Naive thymus-derived CD4-positive, alpha-beta T cell (primary cell): ENCODE measurements at regions of chr14 and their contacts with region 1.

Region 1: DNA sequence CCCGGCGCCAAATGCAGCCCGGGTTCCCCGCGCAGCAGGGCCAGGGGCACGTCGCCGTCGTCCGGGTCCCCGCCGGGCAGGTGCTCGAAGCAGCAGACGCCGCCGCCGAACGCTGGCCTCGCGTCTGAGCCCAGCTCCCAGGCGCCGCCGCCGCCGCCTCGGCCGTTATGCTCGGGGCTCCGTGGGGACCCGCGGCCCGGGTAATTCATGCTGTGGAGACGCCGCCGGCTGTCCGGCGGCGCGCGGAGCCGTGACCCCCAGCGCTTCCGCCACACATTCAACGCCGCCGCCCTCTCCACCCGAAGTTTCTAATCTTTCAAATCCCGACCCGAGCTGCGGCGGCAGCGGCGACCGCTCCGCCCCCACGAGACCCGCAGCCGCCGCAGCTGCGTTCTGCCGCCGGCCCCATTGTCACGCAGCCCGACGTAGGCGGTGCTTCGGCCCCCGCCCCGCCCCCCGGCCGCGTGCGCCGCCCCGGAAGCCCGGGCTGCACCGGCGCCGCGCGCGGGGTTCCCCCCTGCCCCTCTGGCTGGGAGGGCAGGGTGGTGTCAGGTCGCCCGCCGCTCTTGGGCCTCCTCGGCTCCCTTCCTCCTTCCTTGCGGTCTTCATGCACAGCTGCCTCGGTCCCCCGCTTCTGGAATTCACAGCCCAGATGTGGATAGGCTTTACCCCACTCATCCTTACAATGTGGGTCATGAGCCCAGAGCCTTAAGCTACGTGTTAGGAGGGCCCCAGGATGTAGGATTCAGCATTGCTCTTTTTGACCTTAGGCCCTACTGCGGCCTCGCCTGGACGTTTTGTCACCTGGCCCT is at the start of gene DDHD1:
- DNase-seq: peak; percentile 76 to 88 (median 85)
- ATAC-seq: peak; percentile 95
- H3K4me3 ChIP-seq: peak within 1 kb of the TSS; percentile 86
- H3K4me3 Mint-ChIP-seq: peak within 1 kb of the TSS; percentile 95 to 100 (median 98)
- H3K27ac ChIP-seq: peak within 1 kb of the TSS; percentile 87
- H3K27ac Mint-ChIP-seq: peak within 1 kb of the TSS; percentile 94 to 99 (median 98)
- H3K4me1 ChIP-seq: peaks cover 32 to 34% of the 10 kb centered on the region in 2 donors
- H3K4me1 Mint-ChIP-seq: peaks cover 34 to 55% (median 51%) of the 10 kb centered on the region in 7 donors
- H3K27me3 ChIP-seq: no peaks in the 10 kb centered on the region
- H3K27me3 Mint-ChIP-seq: no peaks in the 10 kb centered on the region
- total RNA-seq, gene DDHD1: 46.7 to 103 (median 55.5) TPM

Region 2: GRCh38 chr14:51239813-51240803 is 1913.0 kb before region 1 on chr14 and contains the start of gene TMX1:
- CTCF ChIA-PET with region 1: no interaction called
- POLR2A ChIA-PET with region 1: no interaction called
- intact Hi-C with region 1: loop called in 1 of 2 experiments (anchors 2 kb)
- DNase-seq: peak; percentile 70 to 88 (median 82)
- ATAC-seq: peak; percentile 94
- H3K4me3 ChIP-seq: peak within 1 kb of the TSS; percentile 99
- H3K4me3 Mint-ChIP-seq: no peak within 1 kb of the TSS
- H3K27ac ChIP-seq: peak within 1 kb of the TSS; percentile 81
- H3K27ac Mint-ChIP-seq: no peak within 1 kb of the TSS
- H3K4me1 ChIP-seq: peaks cover 16 to 17% of the 10 kb centered on the region in 2 donors
- H3K4me1 Mint-ChIP-seq: peaks cover 0 to 29% (median 20%) of the 10 kb centered on the region in 7 donors
- H3K27me3 ChIP-seq: no peaks in the 10 kb centered on the region
- H3K27me3 Mint-ChIP-seq: no peaks in the 10 kb centered on the region
- total RNA-seq, gene TMX1: 13.3 to 48.3 (median 23.1) TPM

Region 3: GRCh38 chr14:52695481-52696091 is 457.5 kb before region 1 on chr14 and contains the start of gene ERO1A:
- CTCF ChIA-PET with region 1: no interaction called
- POLR2A ChIA-PET with region 1: interaction called, 3 read pairs
- intact Hi-C with region 1: loop called in 1 of 2 experiments (anchors 10 kb)
- DNase-seq: peak; percentile 26 to 83 (median 53)
- ATAC-seq: peak; percentile 82
- H3K4me3 ChIP-seq: peak within 1 kb of the TSS; percentile 79
- H3K4me3 Mint-ChIP-seq: peak within 1 kb of the TSS; percentile 95 to 99 (median 99)
- H3K27ac ChIP-seq: peak within 1 kb of the TSS; percentile 85
- H3K27ac Mint-ChIP-seq: peak within 1 kb of the TSS; percentile 94 to 99 (median 98)
- H3K4me1 ChIP-seq: peaks cover 26 to 27% of the 10 kb centered on the region in 2 donors
- H3K4me1 Mint-ChIP-seq: peaks cover 32 to 47% (median 42%) of the 10 kb centered on the region in 7 donors
- H3K27me3 ChIP-seq: no peaks in the 10 kb centered on the region
- H3K27me3 Mint-ChIP-seq: no peaks in the 10 kb centered on the region
- total RNA-seq, gene ERO1A: 65.3 to 201 (median 68.7) TPM

Region 4: GRCh38 chr14:52791203-52792096 is 361.6 kb before region 1 on chr14 and contains the start of gene GNPNAT1:
- CTCF ChIA-PET with region 1: no interaction called
- POLR2A ChIA-PET with region 1: interaction called, 4 read pairs
- intact Hi-C with region 1: loop called (anchors 1 to 5 kb)
- DNase-seq: peak; percentile 85 to 92 (median 89)
- ATAC-seq: peak; percentile 98
- H3K4me3 ChIP-seq: peak within 1 kb of the TSS; percentile 87
- H3K4me3 Mint-ChIP-seq: peak within 1 kb of the TSS; percentile 86 to 94 (median 93)
- H3K27ac ChIP-seq: peak within 1 kb of the TSS; percentile 74
- H3K27ac Mint-ChIP-seq: peak within 1 kb of the TSS; percentile 75 to 96 (median 89)
- H3K4me1 ChIP-seq: peaks cover 15 to 18% of the 10 kb centered on the region in 2 donors
- H3K4me1 Mint-ChIP-seq: peaks cover 23 to 48% (median 44%) of the 10 kb centered on the region in 7 donors
- H3K27me3 ChIP-seq: no peaks in the 10 kb centered on the region
- H3K27me3 Mint-ChIP-seq: no peaks in the 10 kb centered on the region
- total RNA-seq, gene GNPNAT1: 4.6 to 14.7 (median 8.5) TPM

Region 5: DNA sequence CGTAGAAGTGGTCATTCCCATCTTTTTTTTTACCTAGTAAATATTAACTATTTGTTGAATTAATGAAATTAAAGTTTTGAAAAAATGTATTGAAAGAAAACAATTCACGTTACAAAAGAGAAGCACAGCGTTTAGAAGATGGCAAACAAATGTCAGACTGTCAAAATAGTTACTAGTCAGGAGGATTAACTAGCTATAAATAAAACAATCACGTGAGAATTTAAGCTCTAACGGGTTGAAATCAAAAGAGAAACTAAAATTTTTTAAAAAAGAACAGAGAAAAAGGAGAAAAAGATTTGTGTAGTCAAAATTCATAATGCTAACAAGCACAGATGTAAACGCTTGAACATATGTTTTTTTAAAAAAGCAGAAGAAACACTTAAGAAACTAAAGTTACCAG is 26.4 kb before region 1 on chr14:
- CTCF ChIA-PET with region 1: interaction called, 3 read pairs
- POLR2A ChIA-PET with region 1: interaction called, 9 read pairs
- intact Hi-C with region 1: loop called in 1 of 2 experiments (anchors 1 kb)
- DNase-seq: no peak
- ATAC-seq: no peak
- H3K4me3 ChIP-seq: peak overlapping the region; percentile 4
- H3K4me3 Mint-ChIP-seq: peak overlapping the region; percentile 39 to 88 (median 76)
- H3K27ac ChIP-seq: peak overlapping the region; percentile 9
- H3K27ac Mint-ChIP-seq: peak overlapping the region in 8 of 9 donors; percentile 45 to 87 (median 80)
- H3K4me1 ChIP-seq: peaks cover 3 to 16% of the 10 kb centered on the region in 2 donors
- H3K4me1 Mint-ChIP-seq: peaks cover 10 to 37% (median 18%) of the 10 kb centered on the region in 7 donors
- H3K27me3 ChIP-seq: no peaks in the 10 kb centered on the region
- H3K27me3 Mint-ChIP-seq: no peaks in the 10 kb centered on the region

Region 6: GRCh38 chr14:53217295-53217994 is 64.3 kb after region 1 on chr14:
- CTCF ChIA-PET with region 1: no interaction called
- POLR2A ChIA-PET with region 1: interaction called, 14 read pairs
- intact Hi-C with region 1: loop called (anchors 1 kb)
- DNase-seq: peak; percentile 51 to 85 (median 67)
- ATAC-seq: peak; percentile 96
- H3K4me3 ChIP-seq: peak overlapping the region; percentile 72
- H3K4me3 Mint-ChIP-seq: peak overlapping the region; percentile 70 to 94 (median 90)
- H3K27ac ChIP-seq: peak overlapping the region; percentile 56
- H3K27ac Mint-ChIP-seq: peak overlapping the region in 8 of 9 donors; percentile 46 to 90 (median 76)
- H3K4me1 ChIP-seq: peaks cover 5 to 6% of the 10 kb centered on the region in 2 donors
- H3K4me1 Mint-ChIP-seq: peaks cover 5 to 20% (median 12%) of the 10 kb centered on the region in 7 donors
- H3K27me3 ChIP-seq: no peaks in the 10 kb centered on the region
- H3K27me3 Mint-ChIP-seq: peaks cover 0 to 2% (median 0%) of the 10 kb centered on the region in 5 donors

Region 7: DNA sequence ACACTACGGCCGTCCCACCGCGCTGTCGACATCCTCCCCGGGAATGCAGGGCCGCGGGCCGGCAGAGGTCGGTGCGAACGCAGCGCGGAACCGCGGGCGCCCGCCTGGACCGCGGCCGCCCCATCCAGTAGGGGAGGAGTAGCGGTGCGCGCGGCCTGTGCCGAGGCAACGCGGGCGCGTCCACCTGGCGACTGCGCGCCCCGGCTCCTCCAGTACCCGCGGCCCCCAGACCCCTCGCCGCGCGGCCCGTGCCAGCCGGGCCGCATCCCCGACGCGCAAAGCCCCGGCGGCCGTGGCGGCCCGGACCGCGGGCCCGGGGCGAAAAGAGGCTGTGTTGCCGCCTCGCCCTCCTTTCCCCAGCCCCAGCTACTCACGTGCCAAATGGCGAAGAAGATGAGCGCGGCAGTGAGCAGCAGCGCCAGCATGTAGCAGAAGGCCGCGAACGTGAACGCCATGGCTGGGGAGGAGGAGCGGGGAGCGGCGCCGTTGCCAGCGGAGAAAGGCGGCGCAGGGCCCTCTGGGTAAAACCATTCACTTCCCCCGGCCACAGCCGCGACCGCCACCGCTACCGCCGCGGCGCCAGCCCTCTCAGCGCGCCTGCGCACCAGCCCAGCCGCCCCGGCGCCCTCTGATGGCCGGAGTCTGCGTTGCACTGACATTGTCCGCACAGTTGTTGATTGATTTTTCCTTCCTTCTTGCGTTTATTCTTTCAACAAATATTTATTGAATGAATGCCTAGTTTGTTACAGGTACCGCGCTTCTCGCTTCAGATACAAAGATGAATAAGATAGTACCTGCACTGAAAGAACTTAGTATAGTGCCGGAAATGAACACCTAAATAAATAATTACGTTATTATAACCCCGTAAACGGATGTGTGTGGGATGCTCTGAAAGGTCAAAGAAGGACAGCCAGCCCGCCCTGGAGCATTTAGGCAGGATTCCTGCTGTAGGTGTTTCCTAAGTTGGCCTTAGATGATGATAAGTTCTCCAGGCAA is 1288.1 kb after region 1 on chr14 and contains the start of gene CNIH1:
- CTCF ChIA-PET with region 1: no interaction called
- POLR2A ChIA-PET with region 1: no interaction called
- intact Hi-C with region 1: loop called in 1 of 2 experiments (anchors 5 kb)
- DNase-seq: peak; percentile 85 to 99 (median 93)
- ATAC-seq: peak; percentile 97
- H3K4me3 ChIP-seq: peak within 1 kb of the TSS; percentile 73
- H3K4me3 Mint-ChIP-seq: peak within 1 kb of the TSS; percentile 85 to 97 (median 94)
- H3K27ac ChIP-seq: peak within 1 kb of the TSS; percentile 80
- H3K27ac Mint-ChIP-seq: peak within 1 kb of the TSS; percentile 87 to 98 (median 95)
- H3K4me1 ChIP-seq: peaks cover 9 to 23% of the 10 kb centered on the region in 2 donors
- H3K4me1 Mint-ChIP-seq: peaks cover 23 to 54% (median 49%) of the 10 kb centered on the region in 7 donors
- H3K27me3 ChIP-seq: no peaks in the 10 kb centered on the region
- H3K27me3 Mint-ChIP-seq: peaks cover 0 to 2% (median 0%) of the 10 kb centered on the region in 5 donors
- total RNA-seq, gene CNIH1: 50.5 to 87.9 (median 57.8) TPM